Mammary epithelial cell (primary cell): ENCODE measurements at regions of chr11 and their contacts with region 1.

Region 1: DNA sequence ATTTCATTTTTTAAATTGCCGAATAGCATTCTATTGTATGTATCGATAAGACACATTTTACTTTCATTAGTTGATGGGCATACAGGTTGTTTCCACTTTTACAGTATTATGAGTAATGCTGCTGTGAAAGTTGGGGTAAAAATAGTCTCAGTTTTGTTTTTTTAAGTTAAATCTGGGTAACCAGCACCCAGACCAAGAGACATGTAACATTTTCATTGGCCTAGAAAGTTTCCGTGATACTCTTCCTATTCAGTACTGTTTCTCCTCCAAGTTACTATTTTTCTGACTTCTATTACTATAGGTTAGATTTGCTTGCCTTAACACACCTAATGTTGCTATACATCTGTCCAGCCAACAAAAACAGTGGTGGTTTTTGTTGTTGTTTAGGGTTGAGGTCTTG is 12.3 kb downstream of the IPO7 start:
- DNase-seq: no peak
- H3K4me3 ChIP-seq: no peak overlapping the region
- H3K27ac ChIP-seq: no peak overlapping the region
- H3K4me1 ChIP-seq: peaks cover 4% of the 10 kb centered on the region
- H3K27me3 ChIP-seq: no peaks in the 10 kb centered on the region
- CTCF ChIP-seq: no peak

Region 2: DNA sequence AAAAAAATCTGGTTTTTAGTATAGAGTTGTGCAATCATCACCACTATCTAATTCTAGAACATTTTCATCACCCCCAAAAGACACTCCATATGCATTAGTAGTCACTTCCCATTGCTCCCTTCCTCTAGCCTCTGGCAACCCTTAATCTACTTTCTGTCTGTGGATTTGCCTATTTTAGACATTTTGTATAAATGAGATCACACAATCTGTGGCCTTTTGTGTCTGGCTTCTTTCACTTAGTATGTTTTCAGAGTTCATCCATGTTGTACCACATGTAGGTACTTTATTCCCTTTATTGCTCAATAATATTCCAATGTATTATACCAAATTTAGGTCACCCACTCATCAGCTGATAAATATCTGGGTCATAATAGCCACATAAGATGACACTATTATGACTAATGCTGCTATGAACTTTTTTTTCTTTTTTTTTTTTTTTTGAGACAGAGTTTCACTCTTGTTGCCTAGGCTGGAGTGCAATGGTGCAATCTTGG is 237.8 kb before region 1 on chr11:
- CTCF ChIA-PET with region 1: no interaction called
- dilution Hi-C with region 1: loop called (anchors 25 kb)
- in situ Hi-C with region 1: loop called in 1 of 2 experiments (anchors 25 kb)
- intact Hi-C with region 1: no loop called
- DNase-seq: peak; percentile 65
- H3K4me3 ChIP-seq: no peak overlapping the region
- H3K27ac ChIP-seq: no peak overlapping the region
- H3K4me1 ChIP-seq: peaks cover 5% of the 10 kb centered on the region
- H3K27me3 ChIP-seq: no peaks in the 10 kb centered on the region
- CTCF ChIP-seq: no peak

Region 3: DNA sequence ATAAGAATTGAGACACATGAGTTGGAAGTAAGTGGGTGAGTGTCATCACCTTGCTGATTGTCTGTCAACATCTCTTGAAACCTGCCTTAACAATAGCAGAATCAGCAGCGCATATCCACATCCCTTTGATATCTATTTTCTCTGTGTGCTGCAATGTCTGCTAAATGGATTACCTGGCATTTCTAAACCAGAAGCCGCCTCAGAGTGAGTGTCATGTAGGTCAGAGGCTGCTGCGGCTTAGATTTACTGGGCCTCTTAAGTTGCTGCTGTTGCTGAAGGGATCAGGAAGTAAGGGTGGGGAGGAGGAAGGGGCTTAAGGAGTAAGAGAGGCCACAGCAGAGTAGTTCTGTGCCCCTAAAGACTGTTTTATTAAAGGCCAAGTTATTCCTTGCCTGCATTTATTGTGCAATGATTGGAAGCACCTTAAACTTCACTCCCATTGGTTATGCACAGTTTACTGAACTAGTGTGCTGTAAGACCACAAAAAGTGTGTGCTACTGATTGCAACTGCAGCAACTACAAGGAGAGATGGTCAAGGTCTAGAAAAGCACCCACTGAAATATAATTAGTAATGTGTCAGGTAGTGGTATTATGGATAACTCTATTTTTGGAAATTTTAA is 52.6 kb before region 1 on chr11:
- CTCF ChIA-PET with region 1: no interaction called
- dilution Hi-C with region 1: no loop called
- in situ Hi-C with region 1: no loop called
- intact Hi-C with region 1: no loop called
- DNase-seq: no peak
- H3K4me3 ChIP-seq: no peak overlapping the region
- H3K27ac ChIP-seq: no peak overlapping the region
- H3K4me1 ChIP-seq: no peaks in the 10 kb centered on the region
- H3K27me3 ChIP-seq: no peaks in the 10 kb centered on the region
- CTCF ChIP-seq: no peak

Region 4: GRCh38 chr11:9460322-9461067 is 63.7 kb after region 1 on chr11 and contains the start of gene ZNF143:
- CTCF ChIA-PET with region 1: no interaction called
- dilution Hi-C with region 1: no loop called
- in situ Hi-C with region 1: no loop called
- intact Hi-C with region 1: no loop called
- DNase-seq: peak; percentile 100
- H3K4me3 ChIP-seq: peak within 1 kb of the TSS; percentile 65 to 88 (median 82)
- H3K27ac ChIP-seq: peak within 1 kb of the TSS; percentile 98
- H3K4me1 ChIP-seq: peaks cover 19% of the 10 kb centered on the region
- H3K27me3 ChIP-seq: no peaks in the 10 kb centered on the region
- CTCF ChIP-seq: no peak
- total RNA-seq, gene ZNF143: 19.5 to 22.7 TPM

Region 5: GRCh38 chr11:9479899-9480298 is 83.1 kb after region 1 on chr11:
- CTCF ChIA-PET with region 1: no interaction called
- dilution Hi-C with region 1: loop called (anchors 5 kb)
- in situ Hi-C with region 1: no loop called
- intact Hi-C with region 1: no loop called
- DNase-seq: no peak
- H3K4me3 ChIP-seq: no peak overlapping the region
- H3K27ac ChIP-seq: no peak overlapping the region
- H3K4me1 ChIP-seq: peaks cover 3% of the 10 kb centered on the region
- H3K27me3 ChIP-seq: no peaks in the 10 kb centered on the region
- CTCF ChIP-seq: no peak